ENCODE measurements at regions of chr2 and their contacts with region 1.

Region 1: DNA sequence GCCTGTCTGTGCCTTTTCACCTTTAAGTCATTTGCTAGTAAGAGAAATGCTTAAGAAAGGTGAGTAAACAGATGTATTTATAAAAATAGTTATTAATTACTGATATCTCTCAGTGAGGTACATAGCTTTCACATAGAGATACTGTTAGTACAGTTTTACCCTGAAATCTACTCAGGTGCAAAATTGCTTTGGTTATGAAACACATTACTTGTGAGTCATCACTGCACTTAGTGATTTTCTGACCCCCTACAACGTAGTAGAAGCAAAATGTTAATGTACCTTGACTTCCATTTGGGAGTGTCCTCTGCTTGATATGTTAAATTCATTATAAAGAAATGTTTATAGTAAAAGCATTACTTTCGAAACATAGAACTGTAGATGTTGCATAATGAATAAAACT is 6.5 kb downstream of the GLS start:
- DNase-seq: no peak
- ATAC-seq: peak; percentile 29
- H3K4me3 ChIP-seq: no peak overlapping the region
- H3K4me3 Mint-ChIP-seq: peak overlapping the region; percentile 23
- H3K27ac ChIP-seq: peak overlapping the region in 1 of 2 donors; percentile 83
- H3K27ac Mint-ChIP-seq: no peak overlapping the region
- H3K4me1 ChIP-seq: peaks cover 55 to 83% of the 10 kb centered on the region in 2 donors
- H3K4me1 Mint-ChIP-seq: peaks cover 78% of the 10 kb centered on the region
- H3K27me3 ChIP-seq: no peaks in the 10 kb centered on the region
- H3K27me3 Mint-ChIP-seq: no peaks in the 10 kb centered on the region
- CTCF ChIP-seq: no peak

Region 2: DNA sequence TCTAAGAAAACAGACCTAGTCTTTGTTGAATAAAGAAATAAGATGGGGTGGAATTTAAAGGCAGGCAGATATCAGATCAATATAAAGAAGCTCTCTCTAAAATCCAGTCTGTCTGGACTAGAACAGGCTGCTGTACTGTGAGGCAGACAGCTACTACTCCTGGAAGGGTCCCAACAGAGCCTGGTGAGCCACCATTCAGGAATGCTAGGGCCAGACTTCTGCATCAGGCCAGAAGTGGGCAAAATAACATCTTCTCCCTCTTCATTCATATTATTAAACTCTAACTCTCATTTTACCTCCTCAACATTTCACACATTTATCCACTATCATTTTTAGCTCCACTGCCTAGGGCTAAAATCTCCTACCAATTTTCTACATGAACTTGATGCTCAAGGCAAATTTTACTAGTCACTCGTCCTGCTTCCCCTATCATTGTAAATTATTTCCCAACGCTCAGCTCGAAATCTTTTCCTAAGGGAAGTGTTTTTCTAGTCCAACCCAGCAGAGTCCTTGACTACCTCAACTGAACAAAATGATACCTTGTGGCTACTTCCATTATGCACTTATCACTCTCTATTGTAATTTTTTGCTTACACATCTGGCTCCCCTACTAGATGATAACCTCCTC is 51.7 kb before region 1 on chr2:
- CTCF ChIA-PET with region 1: no interaction called
- POLR2A ChIA-PET with region 1: no interaction called
- intact Hi-C with region 1: no loop called
- DNase-seq: no peak
- ATAC-seq: no peak
- H3K4me3 ChIP-seq: no peak overlapping the region
- H3K4me3 Mint-ChIP-seq: no peak overlapping the region
- H3K27ac ChIP-seq: no peak overlapping the region
- H3K27ac Mint-ChIP-seq: no peak overlapping the region
- H3K4me1 ChIP-seq: no peaks in the 10 kb centered on the region
- H3K4me1 Mint-ChIP-seq: no peaks in the 10 kb centered on the region
- H3K27me3 ChIP-seq: no peaks in the 10 kb centered on the region
- H3K27me3 Mint-ChIP-seq: no peaks in the 10 kb centered on the region
- CTCF ChIP-seq: no peak

Region 3: GRCh38 chr2:190849774-190850173 is 37.3 kb before region 1 on chr2:
- CTCF ChIA-PET with region 1: interaction called, 24 read pairs
- POLR2A ChIA-PET with region 1: no interaction called
- intact Hi-C with region 1: loop called (anchors 1 kb)
- DNase-seq: no peak
- ATAC-seq: no peak
- H3K4me3 ChIP-seq: no peak overlapping the region
- H3K4me3 Mint-ChIP-seq: no peak overlapping the region
- H3K27ac ChIP-seq: no peak overlapping the region
- H3K27ac Mint-ChIP-seq: no peak overlapping the region
- H3K4me1 ChIP-seq: peaks cover 7 to 9% of the 10 kb centered on the region in 2 donors
- H3K4me1 Mint-ChIP-seq: peaks cover 12% of the 10 kb centered on the region
- H3K27me3 ChIP-seq: no peaks in the 10 kb centered on the region
- H3K27me3 Mint-ChIP-seq: no peaks in the 10 kb centered on the region
- CTCF ChIP-seq: no peak

Region 4: GRCh38 chr2:190904640-190905261 is 17.7 kb after region 1 on chr2:
- CTCF ChIA-PET with region 1: no interaction called
- POLR2A ChIA-PET with region 1: no interaction called
- intact Hi-C with region 1: loop called (anchors 2 kb)
- DNase-seq: no peak
- ATAC-seq: no peak
- H3K4me3 ChIP-seq: no peak overlapping the region
- H3K4me3 Mint-ChIP-seq: no peak overlapping the region
- H3K27ac ChIP-seq: no peak overlapping the region
- H3K27ac Mint-ChIP-seq: no peak overlapping the region
- H3K4me1 ChIP-seq: no peaks in the 10 kb centered on the region
- H3K4me1 Mint-ChIP-seq: no peaks in the 10 kb centered on the region
- H3K27me3 ChIP-seq: no peaks in the 10 kb centered on the region
- H3K27me3 Mint-ChIP-seq: no peaks in the 10 kb centered on the region
- CTCF ChIP-seq: no peak

Region 5: DNA sequence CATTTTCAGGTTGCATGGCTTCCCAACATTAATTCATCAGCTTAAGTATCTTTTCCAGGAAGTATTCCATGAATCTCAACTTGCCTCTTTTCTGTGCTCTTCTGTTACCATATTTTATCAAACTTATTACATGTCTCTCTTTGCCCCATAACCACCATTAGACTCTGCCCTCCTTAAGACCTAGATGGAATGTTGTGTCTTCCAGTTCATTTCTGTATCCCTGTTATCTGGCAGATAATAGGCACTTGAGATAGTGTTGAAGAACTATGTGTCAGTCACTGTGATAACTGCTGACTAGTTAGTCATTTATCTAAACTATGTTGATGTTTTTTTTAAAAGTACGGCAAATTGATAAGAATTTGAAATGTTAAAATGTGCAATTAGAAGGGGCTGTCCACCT is 35.3 kb after region 1 on chr2:
- CTCF ChIA-PET with region 1: no interaction called
- POLR2A ChIA-PET with region 1: no interaction called
- intact Hi-C with region 1: no loop called
- DNase-seq: no peak
- ATAC-seq: no peak
- H3K4me3 ChIP-seq: no peak overlapping the region
- H3K4me3 Mint-ChIP-seq: no peak overlapping the region
- H3K27ac ChIP-seq: no peak overlapping the region
- H3K27ac Mint-ChIP-seq: no peak overlapping the region
- H3K4me1 ChIP-seq: no peaks in the 10 kb centered on the region
- H3K4me1 Mint-ChIP-seq: no peaks in the 10 kb centered on the region
- H3K27me3 ChIP-seq: no peaks in the 10 kb centered on the region
- H3K27me3 Mint-ChIP-seq: no peaks in the 10 kb centered on the region
- CTCF ChIP-seq: no peak

Region 6: DNA sequence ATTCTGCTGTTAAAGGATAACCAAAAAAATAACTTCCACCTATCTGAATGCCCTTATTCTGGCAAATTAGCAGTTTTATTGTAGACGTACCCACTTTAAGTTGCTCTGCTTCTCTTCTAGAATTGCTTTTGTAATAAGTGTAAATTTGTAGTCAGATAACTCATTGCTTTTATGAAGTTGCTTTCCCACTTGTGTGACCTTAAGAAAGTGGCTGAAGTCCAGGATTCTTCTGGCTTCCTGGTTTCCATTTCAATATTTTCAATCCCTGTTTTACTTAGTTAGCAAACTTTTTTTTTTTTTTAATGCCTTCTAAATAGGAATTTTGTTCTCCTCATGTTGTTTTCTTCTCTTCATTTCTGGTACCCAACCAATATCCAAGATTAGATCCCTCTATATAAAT is 53.4 kb after region 1 on chr2:
- CTCF ChIA-PET with region 1: no interaction called
- POLR2A ChIA-PET with region 1: no interaction called
- intact Hi-C with region 1: no loop called
- DNase-seq: no peak
- ATAC-seq: no peak
- H3K4me3 ChIP-seq: no peak overlapping the region
- H3K4me3 Mint-ChIP-seq: no peak overlapping the region
- H3K27ac ChIP-seq: no peak overlapping the region
- H3K27ac Mint-ChIP-seq: no peak overlapping the region
- H3K4me1 ChIP-seq: no peaks in the 10 kb centered on the region
- H3K4me1 Mint-ChIP-seq: peaks cover 5% of the 10 kb centered on the region
- H3K27me3 ChIP-seq: no peaks in the 10 kb centered on the region
- H3K27me3 Mint-ChIP-seq: no peaks in the 10 kb centered on the region
- CTCF ChIP-seq: no peak

Measured in B cell (primary cell).